B cell (primary cell): ENCODE measurements at regions of chr10 and their contacts with region 1.

Region 1: DNA sequence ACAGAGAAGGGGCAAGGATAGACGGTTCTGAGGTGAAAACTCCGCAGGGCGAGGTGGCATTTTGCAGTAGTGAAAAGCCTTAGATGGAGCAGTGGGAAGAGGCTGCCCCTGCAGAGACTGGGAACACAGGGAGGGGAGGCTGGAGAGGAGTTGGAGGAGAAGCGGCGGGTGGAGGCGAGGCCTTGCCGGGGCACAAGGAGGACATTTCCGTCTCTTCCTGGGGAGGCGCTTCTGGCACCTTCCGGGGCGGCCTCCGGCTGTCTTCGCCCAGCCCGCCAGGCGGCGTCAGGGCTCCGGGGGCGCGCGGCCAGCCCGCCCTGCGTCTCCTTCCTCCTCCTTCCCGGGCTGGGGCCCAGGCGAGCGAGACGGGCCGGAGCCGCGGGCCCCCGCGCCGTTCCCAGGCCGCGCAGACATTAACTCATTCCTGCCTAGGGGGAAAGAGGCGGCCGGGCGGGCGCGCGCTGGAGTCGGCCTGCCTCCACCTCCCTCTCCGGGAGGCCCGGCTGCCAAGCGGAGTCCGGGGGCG is 42.7 kb downstream of the LDB3 start:
- DNase-seq: peak; percentile 89
- ATAC-seq: peak; percentile 86
- H3K4me3 ChIP-seq: peak overlapping the region; percentile 2 to 83 (median 69)
- H3K4me3 Mint-ChIP-seq: peak overlapping the region; percentile 91
- H3K27ac ChIP-seq: peak overlapping the region; percentile 73 to 88
- H3K27ac Mint-ChIP-seq: peak overlapping the region; percentile 96
- H3K4me1 ChIP-seq: peaks cover 9 to 14% of the 10 kb centered on the region in 2 donors
- H3K4me1 Mint-ChIP-seq: peaks cover 11% of the 10 kb centered on the region
- H3K27me3 ChIP-seq: peaks cover 0 to 2% (median 0%) of the 10 kb centered on the region in 4 experiments
- H3K27me3 Mint-ChIP-seq: no peaks in the 10 kb centered on the region
- CTCF ChIP-seq: peak; percentile 82

Region 2: GRCh38 chr10:86755740-86756510 is 44.9 kb after region 1 on chr10:
- CTCF ChIA-PET with region 1: interaction called, 4 read pairs
- POLR2A ChIA-PET with region 1: interaction called, 10 read pairs
- intact Hi-C with region 1: loop called (anchors 1 kb)
- DNase-seq: peak; percentile 86
- ATAC-seq: peak; percentile 91
- H3K4me3 ChIP-seq: peak overlapping the region; percentile 28 to 81 (median 71)
- H3K4me3 Mint-ChIP-seq: peak overlapping the region; percentile 90
- H3K27ac ChIP-seq: no peak overlapping the region
- H3K27ac Mint-ChIP-seq: peak overlapping the region; percentile 67
- H3K4me1 ChIP-seq: peaks cover 37 to 39% of the 10 kb centered on the region in 2 donors
- H3K4me1 Mint-ChIP-seq: peaks cover 44% of the 10 kb centered on the region
- H3K27me3 ChIP-seq: peaks cover 3 to 29% (median 23%) of the 10 kb centered on the region in 4 experiments
- H3K27me3 Mint-ChIP-seq: peaks cover 26% of the 10 kb centered on the region
- CTCF ChIP-seq: no peak

Region 3: GRCh38 chr10:86899670-86900276 is 188.7 kb after region 1 on chr10:
- CTCF ChIA-PET with region 1: interaction called, 12 read pairs
- POLR2A ChIA-PET with region 1: no interaction called
- intact Hi-C with region 1: loop called (anchors 1 kb)
- DNase-seq: peak; percentile 59
- ATAC-seq: no peak
- H3K4me3 ChIP-seq: no peak overlapping the region
- H3K4me3 Mint-ChIP-seq: no peak overlapping the region
- H3K27ac ChIP-seq: no peak overlapping the region
- H3K27ac Mint-ChIP-seq: no peak overlapping the region
- H3K4me1 ChIP-seq: no peaks in the 10 kb centered on the region
- H3K4me1 Mint-ChIP-seq: no peaks in the 10 kb centered on the region
- H3K27me3 ChIP-seq: no peaks in the 10 kb centered on the region
- H3K27me3 Mint-ChIP-seq: no peaks in the 10 kb centered on the region
- CTCF ChIP-seq: peak; percentile 74

Region 4: DNA sequence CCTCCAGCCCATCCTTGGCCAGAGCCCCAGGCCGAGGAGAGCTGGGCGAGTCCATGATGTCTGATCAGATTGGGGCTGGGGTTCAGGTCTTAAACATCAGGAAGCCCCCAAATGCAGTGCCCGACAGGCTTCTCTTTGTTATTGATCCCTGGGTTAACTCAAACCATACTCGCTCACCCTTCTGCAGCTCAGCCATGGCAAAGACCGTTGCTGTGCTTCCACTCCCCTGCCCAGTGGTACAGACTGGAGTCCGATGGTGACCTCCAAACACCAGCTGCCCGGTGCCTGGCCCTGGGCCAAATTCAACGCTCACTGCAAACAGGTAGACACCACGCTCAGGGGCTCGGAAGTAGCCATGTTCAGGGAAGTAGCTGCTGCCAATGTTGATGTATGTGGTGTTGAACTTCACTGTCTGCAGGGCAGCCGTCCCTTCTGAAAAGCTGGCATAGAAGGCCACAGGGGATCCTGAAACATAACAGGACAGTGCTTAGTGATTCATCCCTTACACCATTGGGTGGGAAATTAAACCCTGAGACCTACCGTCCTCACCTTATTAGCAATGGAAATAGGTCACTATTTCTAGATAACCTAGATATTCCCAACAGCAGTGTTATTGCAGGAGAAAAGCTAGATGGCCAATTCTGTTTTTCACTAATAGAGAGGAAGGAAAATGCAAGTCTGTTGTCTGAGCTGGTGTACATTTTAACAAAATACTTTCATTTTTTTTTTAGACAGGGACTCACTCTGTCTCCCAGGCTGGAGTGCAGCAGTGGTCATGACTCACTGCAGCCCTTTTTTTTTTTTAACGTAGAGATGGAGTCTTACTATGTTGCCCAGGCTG is 225.8 kb after region 1 on chr10:
- CTCF ChIA-PET with region 1: no interaction called
- POLR2A ChIA-PET with region 1: no interaction called
- intact Hi-C with region 1: loop called (anchors 1 kb)
- DNase-seq: no peak
- ATAC-seq: no peak
- H3K4me3 ChIP-seq: no peak overlapping the region
- H3K4me3 Mint-ChIP-seq: no peak overlapping the region
- H3K27ac ChIP-seq: no peak overlapping the region
- H3K27ac Mint-ChIP-seq: no peak overlapping the region
- H3K4me1 ChIP-seq: peaks cover 0 to 4% of the 10 kb centered on the region in 2 donors
- H3K4me1 Mint-ChIP-seq: no peaks in the 10 kb centered on the region
- H3K27me3 ChIP-seq: no peaks in the 10 kb centered on the region
- H3K27me3 Mint-ChIP-seq: no peaks in the 10 kb centered on the region
- CTCF ChIP-seq: no peak

Region 5: DNA sequence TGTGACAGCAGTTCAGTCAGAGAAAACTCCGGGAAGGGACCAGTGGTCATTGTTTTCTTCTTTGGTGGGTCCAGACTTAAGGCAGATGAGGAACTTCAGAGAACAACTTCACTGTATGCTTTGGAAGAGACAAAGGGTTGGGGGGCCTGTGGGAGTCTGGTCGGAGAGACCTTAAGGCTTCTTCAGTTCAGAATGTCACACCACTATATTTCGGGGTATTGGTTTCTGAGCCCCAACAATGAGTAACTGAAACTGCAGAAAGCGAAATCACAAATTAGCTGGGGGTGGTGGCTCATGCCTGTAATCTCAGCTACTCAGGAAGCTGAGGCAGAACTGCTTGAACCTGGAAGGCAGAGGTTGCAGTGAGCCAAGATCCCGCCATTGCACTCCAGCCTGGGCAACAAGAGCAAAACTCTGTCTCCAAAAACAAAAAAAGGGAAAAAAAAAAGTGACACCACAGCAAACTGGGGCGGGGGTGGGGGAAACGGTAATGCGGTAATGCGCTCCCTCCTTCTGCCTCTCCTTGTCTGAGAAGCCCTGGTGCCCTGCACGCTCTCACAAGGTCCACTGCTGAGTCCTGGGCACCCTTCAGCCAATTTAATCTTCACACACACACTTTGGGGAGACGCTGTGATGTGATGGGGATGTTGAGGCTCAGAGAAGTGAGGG is 255.1 kb after region 1 on chr10:
- CTCF ChIA-PET with region 1: interaction called, 4 read pairs
- POLR2A ChIA-PET with region 1: no interaction called
- intact Hi-C with region 1: loop called (anchors 1 kb)
- DNase-seq: no peak
- ATAC-seq: no peak
- H3K4me3 ChIP-seq: peak overlapping the region in 2 of 5 experiments; percentile 23 to 33
- H3K4me3 Mint-ChIP-seq: peak overlapping the region; percentile 75
- H3K27ac ChIP-seq: no peak overlapping the region
- H3K27ac Mint-ChIP-seq: peak overlapping the region; percentile 50
- H3K4me1 ChIP-seq: peaks cover 24 to 50% of the 10 kb centered on the region in 2 donors
- H3K4me1 Mint-ChIP-seq: peaks cover 32% of the 10 kb centered on the region
- H3K27me3 ChIP-seq: peaks cover 0 to 33% (median 15%) of the 10 kb centered on the region in 4 experiments
- H3K27me3 Mint-ChIP-seq: peaks cover 7% of the 10 kb centered on the region
- CTCF ChIP-seq: no peak

Region 6: GRCh38 chr10:87094373-87095235 is 383.6 kb after region 1 on chr10 and contains the starts of genes GLUD1 and SHLD2:
- CTCF ChIA-PET with region 1: no interaction called
- POLR2A ChIA-PET with region 1: no interaction called
- intact Hi-C with region 1: loop called (anchors 2 kb)
- DNase-seq: peak; percentile 92
- ATAC-seq: peak; percentile 73
- H3K4me3 ChIP-seq: peak within 1 kb of the TSS; percentile 59 to 79 (median 78)
- H3K4me3 Mint-ChIP-seq: peak within 1 kb of the TSS; percentile 96
- H3K27ac ChIP-seq: peak within 1 kb of the TSS; percentile 86 to 93
- H3K27ac Mint-ChIP-seq: peak within 1 kb of the TSS; percentile 95
- H3K4me1 ChIP-seq: peaks cover 26 to 32% of the 10 kb centered on the region in 2 donors
- H3K4me1 Mint-ChIP-seq: peaks cover 51% of the 10 kb centered on the region
- H3K27me3 ChIP-seq: no peaks in the 10 kb centered on the region
- H3K27me3 Mint-ChIP-seq: no peaks in the 10 kb centered on the region
- CTCF ChIP-seq: no peak
- total RNA-seq, gene GLUD1: 71.5 and 81.0 TPM in 2 replicates
- total RNA-seq, gene SHLD2: 22.0 and 22.3 TPM in 2 replicates